ENCODE measurements at regions of chr6 and their contacts with region 1.

Region 1: DNA sequence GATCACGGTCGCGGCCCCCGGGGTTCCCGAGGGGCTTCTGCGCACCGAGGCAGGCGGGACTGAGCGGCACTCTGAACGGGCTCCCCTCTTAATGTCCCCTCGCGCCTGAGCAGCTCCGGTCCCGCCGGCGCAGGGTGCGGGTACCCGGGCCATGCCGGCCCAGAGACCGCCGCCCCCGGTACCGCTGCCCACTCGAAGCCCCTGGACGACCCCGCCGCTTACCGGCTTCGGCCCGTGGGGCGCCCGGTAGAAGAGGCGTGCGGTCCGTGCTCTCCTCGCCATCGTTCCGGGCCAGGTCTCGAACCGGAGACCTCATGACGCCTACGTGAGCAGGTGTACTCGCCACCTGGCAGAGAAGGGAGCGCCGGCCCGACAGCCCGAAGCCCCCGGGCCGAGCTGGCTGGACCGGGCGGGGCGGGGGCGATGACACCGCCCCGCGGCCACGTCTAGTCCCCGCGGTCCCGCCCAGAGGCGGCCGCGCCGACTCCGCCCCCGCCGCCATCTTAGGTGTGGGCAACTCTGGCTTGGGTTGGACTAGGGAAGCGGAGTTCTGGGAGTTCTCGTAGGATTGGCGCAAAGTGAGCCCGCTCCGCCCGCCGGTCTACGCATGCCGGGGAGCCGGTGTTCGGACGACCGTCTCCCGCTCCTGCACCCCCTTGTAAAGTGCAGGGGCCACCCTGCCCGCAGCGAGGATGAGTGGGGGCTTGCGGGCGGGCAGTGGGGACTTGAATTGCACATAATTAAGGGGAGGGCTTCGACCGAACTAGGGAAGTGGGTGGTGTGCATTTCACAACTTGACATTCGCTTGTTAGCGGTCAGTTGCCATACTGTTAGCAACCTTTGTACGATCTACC is at the start of gene SLC17A5:
- DNase-seq: peak; percentile 95
- H3K4me3 Mint-ChIP-seq: peak within 1 kb of the TSS; percentile 97
- H3K27ac Mint-ChIP-seq: peak within 1 kb of the TSS; percentile 91
- H3K4me1 Mint-ChIP-seq: peaks cover 32% of the 10 kb centered on the region
- H3K27me3 Mint-ChIP-seq: no peaks in the 10 kb centered on the region
- CTCF ChIP-seq: no peak
- total RNA-seq, gene SLC17A5: 6.1 and 7.2 TPM in 2 replicates

Region 2: DNA sequence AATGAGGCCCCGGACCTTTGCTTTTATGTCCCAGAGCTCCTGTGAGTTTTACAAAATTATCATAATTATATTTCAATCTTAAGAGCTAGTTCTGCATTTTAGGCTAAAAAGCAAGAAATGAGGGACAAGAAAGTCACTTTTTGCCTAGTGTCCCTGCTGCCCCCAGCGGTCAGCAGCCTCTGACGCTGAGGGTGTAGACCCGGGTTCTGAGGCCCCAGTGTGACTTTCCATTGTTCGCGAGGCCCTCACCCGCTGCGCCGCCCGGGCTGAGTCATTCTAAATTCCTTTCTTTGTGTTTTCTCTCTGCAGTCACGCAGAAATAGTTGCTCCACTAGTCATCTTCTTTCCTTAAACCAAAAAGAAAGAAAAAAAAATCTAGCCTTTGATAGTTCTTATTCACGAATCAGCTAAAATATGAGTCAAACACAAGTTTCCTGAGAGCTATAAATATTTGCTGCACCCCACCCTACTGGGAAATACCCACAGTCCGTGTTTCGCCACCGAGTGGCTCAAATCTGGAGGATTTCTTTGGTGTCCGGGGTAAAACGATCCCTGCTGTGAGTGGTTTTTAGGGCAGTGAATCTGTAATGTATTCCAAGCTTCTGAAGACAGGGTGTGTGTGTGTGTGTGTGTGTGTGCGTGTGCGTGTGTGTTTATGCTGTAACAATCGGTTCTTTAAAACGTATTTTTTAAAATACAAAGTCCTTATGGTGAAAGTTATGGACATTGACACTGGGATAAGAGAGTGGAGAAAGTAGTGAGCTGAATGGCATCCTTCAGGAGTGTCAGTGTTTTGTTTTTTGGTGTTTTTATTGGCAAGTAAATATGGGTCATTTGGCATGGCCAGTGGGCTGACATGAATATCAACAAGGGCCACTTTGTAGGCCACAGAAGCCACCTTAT is 73.3 kb before region 1 on chr6:
- CTCF ChIA-PET with region 1: interaction called, 3 read pairs
- POLR2A ChIA-PET with region 1: interaction called, 27 read pairs
- intact Hi-C with region 1: no loop called
- DNase-seq: peak; percentile 94
- H3K4me3 Mint-ChIP-seq: peak overlapping the region; percentile 81
- H3K27ac Mint-ChIP-seq: peak overlapping the region; percentile 100
- H3K4me1 Mint-ChIP-seq: peaks cover 9% of the 10 kb centered on the region
- H3K27me3 Mint-ChIP-seq: no peaks in the 10 kb centered on the region
- CTCF ChIP-seq: peak; percentile 17

Region 3: DNA sequence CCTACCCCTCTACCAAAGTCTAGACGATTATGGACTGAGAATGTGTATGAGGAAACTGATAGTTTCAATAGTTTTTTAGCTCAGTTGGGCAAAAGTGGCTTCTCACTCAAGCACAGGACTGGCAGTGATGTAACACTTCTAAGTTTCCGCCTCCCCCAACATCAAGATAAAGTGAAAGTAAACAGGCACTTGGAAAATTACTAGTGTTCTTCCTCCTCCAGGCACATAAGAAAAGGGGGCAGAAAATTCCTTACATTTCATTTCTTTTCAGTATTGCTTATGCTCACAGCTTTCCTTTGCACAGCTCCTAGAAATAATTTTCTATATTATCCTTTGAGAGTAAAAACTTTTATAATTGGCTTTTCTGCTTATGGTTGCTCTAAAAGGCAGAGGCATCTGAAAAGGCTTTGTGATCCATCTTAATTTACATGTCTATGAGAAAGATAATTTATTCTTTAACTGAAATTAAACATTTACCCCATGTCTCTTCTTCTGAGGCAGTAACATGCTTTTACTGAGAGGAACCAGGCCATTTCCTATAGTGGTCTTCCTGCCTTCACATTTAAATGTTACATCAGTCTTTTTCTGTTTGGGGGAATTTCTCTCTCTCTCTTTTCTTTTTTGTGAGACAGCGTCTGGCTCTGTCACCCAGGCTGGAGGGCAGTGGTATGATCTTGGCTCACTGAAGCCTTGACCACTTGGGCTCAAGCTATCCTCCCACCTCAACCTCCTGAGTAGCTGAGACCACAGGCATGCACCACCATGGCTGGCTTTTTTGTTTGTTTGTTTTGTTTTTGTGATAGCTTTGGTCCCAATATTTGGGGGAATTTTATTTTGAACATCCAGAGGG is 68.0 kb before region 1 on chr6:
- CTCF ChIA-PET with region 1: interaction called, 3 read pairs
- POLR2A ChIA-PET with region 1: interaction called, 27 read pairs
- intact Hi-C with region 1: no loop called
- DNase-seq: peak; percentile 79
- H3K4me3 Mint-ChIP-seq: peak overlapping the region; percentile 63
- H3K27ac Mint-ChIP-seq: peak overlapping the region; percentile 98
- H3K4me1 Mint-ChIP-seq: peaks cover 10% of the 10 kb centered on the region
- H3K27me3 Mint-ChIP-seq: no peaks in the 10 kb centered on the region
- CTCF ChIP-seq: no peak

Region 4: DNA sequence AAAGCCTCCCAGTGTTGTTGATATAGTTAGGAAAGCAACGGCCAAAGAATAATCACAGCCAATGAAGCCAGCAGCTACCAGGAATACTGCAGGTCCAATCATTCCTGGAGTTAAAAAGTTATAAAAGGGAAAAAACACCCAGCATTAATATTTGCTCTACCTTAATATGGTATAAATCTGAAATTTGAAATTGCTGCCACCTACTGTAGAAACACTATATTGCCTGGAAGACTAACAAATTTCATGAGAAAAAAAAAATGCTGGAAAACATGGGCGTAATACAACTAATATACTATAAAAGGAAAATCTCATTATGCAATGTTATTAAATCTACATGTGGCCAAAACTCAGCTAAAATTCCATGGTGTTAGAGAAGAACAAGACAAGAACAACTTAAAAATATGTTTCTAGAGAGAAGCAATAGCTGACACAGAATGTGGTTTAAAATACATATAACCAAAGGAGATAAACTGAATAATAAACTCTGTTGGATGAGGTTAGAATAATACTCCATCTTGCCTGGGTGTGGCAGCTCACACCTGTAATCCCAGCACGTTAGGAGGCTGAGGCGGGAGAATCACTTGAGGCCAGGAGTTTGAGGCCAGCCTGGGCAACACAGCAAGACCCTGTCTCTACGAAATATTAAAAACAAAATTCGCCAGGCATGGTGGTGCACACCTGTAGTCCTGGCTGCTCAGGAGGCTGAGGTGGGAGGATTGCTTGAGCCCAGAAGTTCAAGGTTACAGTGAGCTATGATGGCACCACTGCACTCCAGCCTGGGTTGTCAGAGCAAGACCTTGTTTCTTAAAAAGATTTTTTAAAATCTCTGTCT is 43.1 kb before region 1 on chr6:
- CTCF ChIA-PET with region 1: interaction called, 10 read pairs
- POLR2A ChIA-PET with region 1: interaction called, 12 read pairs
- intact Hi-C with region 1: no loop called
- DNase-seq: peak; percentile 64
- H3K4me3 Mint-ChIP-seq: no peak overlapping the region
- H3K27ac Mint-ChIP-seq: peak overlapping the region; percentile 19
- H3K4me1 Mint-ChIP-seq: no peaks in the 10 kb centered on the region
- H3K27me3 Mint-ChIP-seq: no peaks in the 10 kb centered on the region
- CTCF ChIP-seq: peak; percentile 42

Region 5: GRCh38 chr6:73665686-73666319 is 12.0 kb after region 1 on chr6:
- CTCF ChIA-PET with region 1: interaction called, 5 read pairs
- POLR2A ChIA-PET with region 1: interaction called, 12 read pairs
- intact Hi-C with region 1: no loop called
- DNase-seq: no peak
- H3K4me3 Mint-ChIP-seq: no peak overlapping the region
- H3K27ac Mint-ChIP-seq: no peak overlapping the region
- H3K4me1 Mint-ChIP-seq: peaks cover 6% of the 10 kb centered on the region
- H3K27me3 Mint-ChIP-seq: no peaks in the 10 kb centered on the region
- CTCF ChIP-seq: no peak

Region 6: GRCh38 chr6:73704260-73704659 is 50.5 kb after region 1 on chr6:
- CTCF ChIA-PET with region 1: interaction called, 4 read pairs
- POLR2A ChIA-PET with region 1: interaction called, 12 read pairs
- intact Hi-C with region 1: no loop called
- DNase-seq: peak; percentile 99
- H3K4me3 Mint-ChIP-seq: no peak overlapping the region
- H3K27ac Mint-ChIP-seq: no peak overlapping the region
- H3K4me1 Mint-ChIP-seq: peaks cover 30% of the 10 kb centered on the region
- H3K27me3 Mint-ChIP-seq: no peaks in the 10 kb centered on the region
- CTCF ChIP-seq: no peak